PC-3 (cell line): ENCODE measurements at regions of chr10 and their contacts with region 1.

Region 1: GRCh38 chr10:36283827-36284226 is 641.7 kb upstream of the FZD8 start:
- DNase-seq: no peak
- ATAC-seq: no peak
- H3K4me3 ChIP-seq: no peak overlapping the region
- H3K27ac ChIP-seq: no peak overlapping the region
- H3K4me1 ChIP-seq: no peaks in the 10 kb centered on the region
- H3K27me3 ChIP-seq: no peaks in the 10 kb centered on the region
- CTCF ChIP-seq: no peak

Region 2: GRCh38 chr10:36324831-36325387 is 41.1 kb after region 1 on chr10:
- CTCF ChIA-PET with region 1: interaction called, 3 read pairs
- POLR2A ChIA-PET with region 1: no interaction called
- intact Hi-C with region 1: loop called (anchors 2 kb)
- DNase-seq: peak; percentile 89
- ATAC-seq: peak; percentile 88
- H3K4me3 ChIP-seq: no peak overlapping the region
- H3K27ac ChIP-seq: peak overlapping the region; percentile 57
- H3K4me1 ChIP-seq: peaks cover 18% of the 10 kb centered on the region
- H3K27me3 ChIP-seq: no peaks in the 10 kb centered on the region
- CTCF ChIP-seq: no peak

Region 3: GRCh38 chr10:36671607-36672006 is 387.8 kb after region 1 on chr10:
- CTCF ChIA-PET with region 1: no interaction called
- POLR2A ChIA-PET with region 1: no interaction called
- intact Hi-C with region 1: no loop called
- DNase-seq: peak; percentile 99
- ATAC-seq: peak; percentile 66
- H3K4me3 ChIP-seq: peak overlapping the region; percentile 26; the same call in 1 of the 2 replicates
- H3K27ac ChIP-seq: peak overlapping the region; percentile 70
- H3K4me1 ChIP-seq: peaks cover 46% of the 10 kb centered on the region
- H3K27me3 ChIP-seq: no peaks in the 10 kb centered on the region
- CTCF ChIP-seq: no peak